Activated naive CD4-positive, alpha-beta T cell treated with anti-CD3 and anti-CD28 coated beads, Interleukin-2, amount 10 ng/mL, durations not matched to agents 7 days and 5 days (primary cell): ENCODE measurements at regions of chr11 and their contacts with region 1.

Region 1: DNA sequence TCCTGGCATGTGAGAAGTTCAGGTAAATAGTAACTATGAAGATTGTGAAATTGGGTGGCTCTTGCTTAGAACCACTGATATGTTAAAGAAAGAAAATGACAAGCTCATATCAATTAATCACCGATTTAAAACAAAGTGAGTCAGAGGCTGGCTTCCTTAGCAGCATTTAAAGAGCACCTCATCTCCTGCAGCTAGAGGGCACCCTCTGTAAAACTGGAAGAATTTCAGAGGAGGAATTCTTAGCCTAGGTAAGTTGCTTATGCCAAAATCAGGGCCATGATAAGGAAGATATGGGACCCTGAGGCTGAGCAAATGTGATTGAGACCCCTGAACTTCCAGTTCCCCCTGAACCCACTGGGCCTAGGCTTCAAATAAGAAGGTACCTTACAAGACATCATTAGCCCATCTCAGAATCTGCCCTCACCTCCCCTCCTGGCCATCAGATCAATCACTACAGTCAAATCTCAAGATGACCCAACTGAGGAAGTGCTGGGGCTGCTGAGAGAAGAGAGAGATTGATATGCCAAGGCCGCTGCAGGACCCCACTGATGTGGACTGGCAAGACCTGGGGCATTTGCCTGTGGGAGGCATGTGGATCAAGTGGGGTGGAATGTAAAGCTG is 8.6 kb upstream of the CD3E start:
- DNase-seq: peak; percentile 64
- H3K4me3 Mint-ChIP-seq: no peak overlapping the region
- H3K27ac Mint-ChIP-seq: no peak overlapping the region
- H3K4me1 Mint-ChIP-seq: peaks cover 13% of the 10 kb centered on the region
- H3K27me3 Mint-ChIP-seq: no peaks in the 10 kb centered on the region

Region 2: DNA sequence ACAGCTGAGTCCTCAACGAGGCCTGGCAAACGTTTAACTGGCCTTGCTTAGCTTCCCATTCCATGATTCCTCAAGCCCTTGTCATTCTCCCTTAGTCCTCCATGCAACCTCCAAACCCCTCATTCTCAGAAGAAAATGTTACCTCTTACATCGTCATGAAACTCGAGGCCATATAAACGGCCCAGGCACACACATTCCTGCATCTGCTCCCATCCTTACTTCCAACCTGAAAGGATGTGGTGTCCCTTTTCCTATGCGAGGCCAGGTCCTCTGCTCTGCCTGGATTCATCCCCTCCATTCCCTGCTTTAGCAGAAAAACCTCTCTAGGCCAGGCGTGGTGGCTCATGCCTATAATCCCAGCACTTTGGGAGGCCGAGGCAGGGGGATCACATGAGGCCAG is 52.8 kb before region 1 on chr11:
- CTCF ChIA-PET with region 1: no interaction called
- DNase-seq: no peak
- H3K4me3 Mint-ChIP-seq: no peak overlapping the region
- H3K27ac Mint-ChIP-seq: no peak overlapping the region
- H3K4me1 Mint-ChIP-seq: peaks cover 84% of the 10 kb centered on the region
- H3K27me3 Mint-ChIP-seq: no peaks in the 10 kb centered on the region

Region 3: DNA sequence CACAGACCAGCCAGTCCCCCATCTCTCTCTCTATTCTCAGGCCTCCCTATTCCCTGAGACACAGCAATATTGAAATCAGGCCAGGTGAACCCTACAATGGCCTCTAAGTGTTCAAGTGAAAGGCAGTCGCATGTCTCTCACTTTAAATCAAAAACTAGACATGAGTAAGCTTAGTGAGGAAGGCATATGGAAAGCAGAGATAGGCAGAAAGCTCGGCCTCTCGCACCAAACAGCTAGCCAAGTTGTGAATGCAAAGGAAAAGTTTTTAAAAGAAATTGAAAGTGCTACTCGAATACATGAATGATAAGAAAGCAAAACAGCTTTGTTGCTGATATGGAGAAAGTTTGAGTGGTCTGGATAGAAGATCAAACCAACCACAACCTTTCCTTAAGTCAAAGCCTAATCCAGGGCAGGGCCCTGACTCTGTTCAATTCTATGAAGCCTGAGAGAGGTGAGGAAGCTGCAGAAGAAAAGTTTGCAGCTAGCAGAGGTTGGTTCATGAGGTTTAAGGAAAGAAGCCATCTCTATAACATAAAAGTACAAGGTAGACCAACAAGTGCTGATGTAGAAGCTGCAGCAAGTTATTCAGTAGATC is 12.1 kb before region 1 on chr11:
- CTCF ChIA-PET with region 1: interaction called, 14 read pairs
- DNase-seq: no peak
- H3K4me3 Mint-ChIP-seq: no peak overlapping the region
- H3K27ac Mint-ChIP-seq: peak overlapping the region; percentile 79
- H3K4me1 Mint-ChIP-seq: peaks cover 39% of the 10 kb centered on the region
- H3K27me3 Mint-ChIP-seq: no peaks in the 10 kb centered on the region

Region 4: GRCh38 chr11:118338637-118339061 is 42.7 kb after region 1 on chr11:
- CTCF ChIA-PET with region 1: interaction called, 76 read pairs
- DNase-seq: peak; percentile 95
- H3K4me3 Mint-ChIP-seq: peak overlapping the region; percentile 81
- H3K27ac Mint-ChIP-seq: peak overlapping the region; percentile 100
- H3K4me1 Mint-ChIP-seq: peaks cover 72% of the 10 kb centered on the region
- H3K27me3 Mint-ChIP-seq: peaks cover 4% of the 10 kb centered on the region

Region 5: GRCh38 chr11:118353084-118353710 is 57.3 kb after region 1 on chr11:
- CTCF ChIA-PET with region 1: interaction called, 89 read pairs
- DNase-seq: no peak
- H3K4me3 Mint-ChIP-seq: no peak overlapping the region
- H3K27ac Mint-ChIP-seq: peak overlapping the region; percentile 80
- H3K4me1 Mint-ChIP-seq: peaks cover 31% of the 10 kb centered on the region
- H3K27me3 Mint-ChIP-seq: no peaks in the 10 kb centered on the region

Region 6: DNA sequence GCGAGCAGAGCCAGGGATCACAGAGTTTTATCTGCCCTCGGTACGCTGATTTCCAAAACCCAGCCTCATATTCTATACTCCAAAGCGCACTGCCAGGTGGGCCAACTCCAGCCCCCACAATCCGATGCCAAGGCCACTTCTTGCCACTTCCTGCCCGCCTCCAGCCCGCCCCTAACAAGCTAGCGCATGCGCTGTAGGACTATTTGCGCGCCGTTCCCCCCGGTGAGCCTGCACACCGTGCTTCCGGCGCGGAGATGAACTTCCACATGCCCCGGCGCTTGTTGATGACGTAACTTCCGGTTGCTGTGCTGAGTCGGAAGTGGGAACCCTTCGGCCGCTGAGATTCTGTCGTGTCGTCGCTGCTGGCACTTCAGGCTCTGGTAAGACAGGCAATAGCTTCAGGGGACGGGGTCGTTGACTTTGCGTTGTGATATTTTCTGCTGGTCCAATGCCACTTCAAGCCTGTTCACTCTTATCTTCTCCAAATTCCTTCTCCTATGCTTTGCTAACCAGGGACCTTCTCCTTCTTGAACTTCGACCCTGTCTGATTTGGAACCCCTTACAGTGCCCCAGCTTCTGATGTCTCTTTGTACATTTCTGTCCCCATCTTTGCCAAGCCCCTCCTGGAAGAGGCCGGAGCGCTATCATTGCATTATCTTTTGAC is 63.5 kb after region 1 on chr11 and contains the start of gene UBE4A:
- CTCF ChIA-PET with region 1: interaction called, 89 read pairs
- DNase-seq: peak; percentile 99
- H3K4me3 Mint-ChIP-seq: peak within 1 kb of the TSS; percentile 98
- H3K27ac Mint-ChIP-seq: peak within 1 kb of the TSS; percentile 93
- H3K4me1 Mint-ChIP-seq: peaks cover 46% of the 10 kb centered on the region
- H3K27me3 Mint-ChIP-seq: peaks cover 7% of the 10 kb centered on the region

Region 7: DNA sequence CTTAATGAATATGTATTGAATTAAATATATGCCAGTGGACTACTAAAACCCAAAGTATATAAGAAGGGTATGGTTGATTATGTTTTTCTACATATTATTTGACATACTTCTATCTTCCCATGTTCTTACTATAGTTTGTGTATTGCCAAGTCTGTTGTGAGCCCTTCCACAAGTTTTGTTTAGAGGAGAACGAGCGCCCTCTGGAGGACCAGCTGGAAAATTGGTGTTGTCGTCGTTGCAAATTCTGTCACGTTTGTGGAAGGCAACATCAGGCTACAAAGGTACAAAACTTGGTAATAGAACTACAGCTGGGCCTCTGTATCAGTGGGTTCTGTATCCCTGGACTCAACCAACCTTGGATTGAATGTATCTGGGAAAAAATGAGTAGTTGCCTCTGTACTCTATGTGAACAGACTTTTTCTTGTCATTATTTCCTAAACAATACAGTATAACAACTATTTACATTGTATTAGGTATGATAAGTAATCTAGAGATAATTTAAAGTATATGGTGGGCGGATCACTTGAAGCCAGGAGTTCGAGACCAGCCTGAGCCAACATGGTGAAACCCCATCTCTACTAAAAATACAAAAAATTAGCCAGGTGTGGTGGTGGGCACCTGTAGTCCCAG is 192.7 kb after region 1 on chr11:
- CTCF ChIA-PET with region 1: interaction called, 10 read pairs
- DNase-seq: peak; percentile 86
- H3K4me3 Mint-ChIP-seq: no peak overlapping the region
- H3K27ac Mint-ChIP-seq: peak overlapping the region; percentile 0
- H3K4me1 Mint-ChIP-seq: no peaks in the 10 kb centered on the region
- H3K27me3 Mint-ChIP-seq: no peaks in the 10 kb centered on the region